Heart right ventricle (tissue), 16 donors: ENCODE measurements at regions of chr3 and their contacts with region 1.

Region 1: GRCh38 chr3:146827391-146827790 is 222.2 kb upstream of the PLSCR5 start:
- DNase-seq: no peak
- ATAC-seq: no peak
- H3K4me3 ChIP-seq: no peak overlapping the region
- H3K27ac ChIP-seq: no peak overlapping the region
- H3K4me1 ChIP-seq: peaks cover 0 to 8% (median 0%) of the 10 kb centered on the region in 9 donors
- H3K27me3 ChIP-seq: no peaks in the 10 kb centered on the region
- CTCF ChIP-seq: no peak

Region 2: DNA sequence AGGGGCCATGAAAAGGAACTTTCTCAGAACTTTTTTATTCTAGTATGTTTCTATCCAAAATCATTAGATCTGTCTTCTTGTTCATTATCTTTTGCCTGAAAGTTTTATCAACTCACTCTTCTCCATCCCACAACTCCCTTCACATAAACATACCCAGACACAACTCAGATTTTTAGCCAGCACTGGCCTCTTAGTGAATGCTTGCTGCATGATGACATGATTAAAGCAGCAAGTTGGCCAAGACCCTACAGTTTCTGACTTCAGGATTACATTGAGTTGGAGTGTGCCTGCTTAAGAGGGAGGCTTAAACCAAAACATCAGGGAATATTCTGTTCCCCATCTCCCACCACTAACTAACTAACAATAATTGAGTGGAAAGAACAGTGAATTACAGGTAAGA is 396.2 kb before region 1 on chr3:
- intact Hi-C with region 1: no loop called
- DNase-seq: no peak
- ATAC-seq: no peak
- H3K4me3 ChIP-seq: no peak overlapping the region
- H3K27ac ChIP-seq: no peak overlapping the region
- H3K4me1 ChIP-seq: no peaks in the 10 kb centered on the region
- H3K27me3 ChIP-seq: no peaks in the 10 kb centered on the region
- CTCF ChIP-seq: no peak

Region 3: GRCh38 chr3:146903927-146904326 is 76.5 kb after region 1 on chr3:
- intact Hi-C with region 1: loop called in 1 of 10 experiments (anchors 2 kb)
- DNase-seq: peak in 1 of 2 donors; percentile 47
- ATAC-seq: peak in 7 of 8 donors; percentile 76 to 99 (median 96)
- H3K4me3 ChIP-seq: no peak overlapping the region
- H3K27ac ChIP-seq: peak overlapping the region in 6 of 10 donors; percentile 24 to 61 (median 42)
- H3K4me1 ChIP-seq: peaks cover 0 to 8% (median 0%) of the 10 kb centered on the region in 9 donors
- H3K27me3 ChIP-seq: no peaks in the 10 kb centered on the region
- CTCF ChIP-seq: no peak

Region 4: GRCh38 chr3:147099076-147099475 is 271.7 kb after region 1 on chr3:
- intact Hi-C with region 1: no loop called
- DNase-seq: no peak
- ATAC-seq: no peak
- H3K4me3 ChIP-seq: no peak overlapping the region
- H3K27ac ChIP-seq: no peak overlapping the region
- H3K4me1 ChIP-seq: no peaks in the 10 kb centered on the region
- H3K27me3 ChIP-seq: no peaks in the 10 kb centered on the region
- CTCF ChIP-seq: no peak

Region 5: GRCh38 chr3:147191795-147192385 is 364.5 kb after region 1 on chr3:
- intact Hi-C with region 1: loop called in 1 of 10 experiments (anchors 10 kb)
- DNase-seq: peak in 1 of 2 donors; percentile 16
- ATAC-seq: no peak
- H3K4me3 ChIP-seq: no peak overlapping the region
- H3K27ac ChIP-seq: no peak overlapping the region
- H3K4me1 ChIP-seq: no peaks in the 10 kb centered on the region
- H3K27me3 ChIP-seq: peaks cover 0 to 2% (median 0%) of the 10 kb centered on the region in 7 donors
- CTCF ChIP-seq: peak; percentile 43 to 75 (median 68)